A673 (cell line): ENCODE measurements at regions of chr5 and their contacts with region 1.

Region 1: GRCh38 chr5:16552666-16553343 is 64.0 kb downstream of the RETREG1 start:
- DNase-seq: peak; percentile 79
- H3K4me3 ChIP-seq: no peak overlapping the region
- H3K27ac ChIP-seq: no peak overlapping the region
- H3K4me1 ChIP-seq: peaks cover 11% of the 10 kb centered on the region
- H3K27me3 ChIP-seq: no peaks in the 10 kb centered on the region
- CTCF ChIP-seq: peak; percentile 94

Region 2: DNA sequence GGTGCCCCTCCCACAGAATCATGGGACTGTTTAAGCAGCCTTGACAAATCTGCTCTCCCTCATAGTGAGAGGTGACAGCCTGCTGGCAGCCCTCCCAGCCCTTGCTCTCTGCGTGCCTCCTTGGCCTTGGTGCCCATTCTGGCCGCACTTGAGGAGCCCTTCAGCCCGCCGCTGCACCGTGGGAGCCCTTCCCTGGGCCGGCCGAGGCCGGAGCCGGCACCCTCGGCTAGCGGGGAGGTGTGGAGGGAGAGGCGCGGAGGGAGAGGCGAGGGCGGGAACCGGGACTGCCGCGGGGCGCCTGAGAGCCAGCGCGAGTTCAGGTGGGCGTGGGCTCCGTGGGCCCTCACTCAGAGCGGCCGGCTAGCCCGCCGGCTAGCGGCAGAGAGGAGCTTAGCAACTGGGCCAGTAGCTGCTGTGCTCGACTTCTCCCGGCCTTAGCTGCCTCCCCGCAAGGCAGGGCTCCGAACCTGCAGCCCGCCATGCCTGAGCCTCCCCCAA is 509.2 kb after region 1 on chr5:
- CTCF ChIA-PET with region 1: interaction called, 11 read pairs
- POLR2A ChIA-PET with region 1: no interaction called
- intact Hi-C with region 1: no loop called
- DNase-seq: no peak
- H3K4me3 ChIP-seq: no peak overlapping the region
- H3K27ac ChIP-seq: no peak overlapping the region
- H3K4me1 ChIP-seq: no peaks in the 10 kb centered on the region
- H3K27me3 ChIP-seq: no peaks in the 10 kb centered on the region
- CTCF ChIP-seq: no peak

Region 3: GRCh38 chr5:17302602-17303001 is 749.8 kb after region 1 on chr5:
- CTCF ChIA-PET with region 1: no interaction called
- POLR2A ChIA-PET with region 1: no interaction called
- intact Hi-C with region 1: no loop called
- DNase-seq: peak; percentile 71
- H3K4me3 ChIP-seq: no peak overlapping the region
- H3K27ac ChIP-seq: no peak overlapping the region
- H3K4me1 ChIP-seq: peaks cover 37% of the 10 kb centered on the region
- H3K27me3 ChIP-seq: no peaks in the 10 kb centered on the region
- CTCF ChIP-seq: no peak